Ascending aorta (tissue), 2 donors: ENCODE measurements at regions of chr11 and their contacts with region 1.

Region 1: DNA sequence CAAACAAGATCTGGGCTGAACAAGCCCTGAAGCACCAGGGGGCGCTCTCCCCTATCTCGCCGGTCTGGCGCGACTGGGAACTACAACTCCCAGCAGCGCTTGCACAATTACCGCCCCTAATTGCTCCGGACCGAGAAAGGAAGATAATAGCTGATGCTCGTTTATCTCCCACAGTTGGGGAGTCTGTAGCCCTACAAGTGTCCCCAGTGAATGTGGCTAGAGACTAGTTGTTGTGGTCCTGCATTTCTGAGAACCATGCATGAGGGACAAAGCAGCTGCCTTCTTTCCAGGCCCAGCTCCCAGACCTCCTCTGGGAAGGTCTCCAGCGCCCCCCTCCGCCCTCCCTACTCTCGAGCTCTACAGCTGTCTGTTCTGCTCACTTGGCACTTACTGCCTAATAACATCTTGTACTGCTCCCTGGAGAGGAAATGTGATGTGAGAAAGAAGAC is 34.4 kb downstream of the NRXN2 start:
- DNase-seq: peak; percentile 39 to 93
- H3K4me3 ChIP-seq: peak overlapping the region; percentile 28 to 62
- H3K27ac ChIP-seq: peak overlapping the region; percentile 78 to 89
- H3K4me1 ChIP-seq: peaks cover 20 to 24% of the 10 kb centered on the region in 2 donors
- H3K27me3 ChIP-seq: no peaks in the 10 kb centered on the region
- CTCF ChIP-seq: peak; percentile 88 to 92 (median 91)

Region 2: GRCh38 chr11:64516226-64516625 is 172.3 kb before region 1 on chr11:
- intact Hi-C with region 1: no loop called
- DNase-seq: no peak
- H3K4me3 ChIP-seq: no peak overlapping the region
- H3K27ac ChIP-seq: no peak overlapping the region
- H3K4me1 ChIP-seq: no peaks in the 10 kb centered on the region
- H3K27me3 ChIP-seq: no peaks in the 10 kb centered on the region
- CTCF ChIP-seq: no peak

Region 3: GRCh38 chr11:64675450-64676260 is 12.9 kb before region 1 on chr11:
- intact Hi-C with region 1: loop called (anchors 1 kb)
- DNase-seq: peak; percentile 86 to 94
- H3K4me3 ChIP-seq: no peak overlapping the region
- H3K27ac ChIP-seq: peak overlapping the region; percentile 76 to 80
- H3K4me1 ChIP-seq: peaks cover 6 to 15% of the 10 kb centered on the region in 2 donors
- H3K27me3 ChIP-seq: no peaks in the 10 kb centered on the region
- CTCF ChIP-seq: no peak

Region 4: DNA sequence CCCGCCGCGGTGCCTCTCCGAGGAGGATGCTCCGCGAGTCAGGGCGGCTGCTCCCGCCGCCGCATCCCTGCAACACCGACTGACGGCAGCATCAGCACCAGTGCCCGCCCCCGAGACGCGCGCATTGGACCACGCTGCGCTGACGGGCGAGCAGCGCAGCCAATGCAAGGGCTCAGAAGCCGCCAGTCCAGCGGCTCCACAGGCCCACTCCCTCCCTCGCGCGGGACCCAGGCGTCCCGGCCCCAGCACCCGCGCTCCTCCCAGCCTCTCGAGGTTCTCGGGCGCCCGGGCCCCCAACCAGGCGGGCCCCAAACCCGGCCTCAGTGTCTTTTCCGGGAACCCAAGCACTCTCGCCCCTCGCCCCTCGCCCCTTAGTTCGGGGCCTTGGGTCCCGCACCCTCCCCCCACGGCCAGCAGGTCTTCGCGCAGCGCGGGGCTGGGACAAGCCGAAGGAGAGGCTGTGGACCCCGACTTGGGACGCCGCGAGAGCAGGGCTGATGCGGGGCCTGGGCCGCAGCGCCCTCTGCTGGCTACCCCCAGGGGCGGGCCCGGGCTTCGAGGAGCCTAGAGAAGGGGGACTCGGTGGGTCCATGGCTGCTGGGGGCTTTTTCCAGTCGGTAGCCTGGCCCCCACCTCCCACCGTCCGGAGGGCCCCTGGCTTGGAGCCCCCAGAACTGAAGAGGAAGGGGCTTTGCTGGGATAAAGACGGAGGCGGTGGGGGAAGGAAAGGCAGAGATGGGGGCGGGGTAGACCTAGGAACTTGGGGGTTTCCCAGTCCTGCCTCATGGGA is 34.8 kb after region 1 on chr11 and contains the start of gene NRXN2:
- intact Hi-C with region 1: loop called (anchors 1 kb)
- DNase-seq: peak in 1 of 2 donors; percentile 85
- H3K4me3 ChIP-seq: peak within 1 kb of the TSS; percentile 70 to 82
- H3K27ac ChIP-seq: peak within 1 kb of the TSS; percentile 36 to 61
- H3K4me1 ChIP-seq: peaks cover 0 to 7% of the 10 kb centered on the region in 2 donors
- H3K27me3 ChIP-seq: no peaks in the 10 kb centered on the region
- CTCF ChIP-seq: peak; percentile 94 to 100 (median 96)
- total RNA-seq, gene NRXN2: 26.0 TPM